ENCODE measurements at regions of chr1 and their contacts with region 1.

Region 1: GRCh38 chr1:94025383-94026340 is 95.3 kb downstream of the ABCA4 start:
- DNase-seq: no peak
- ATAC-seq: peak; percentile 63

Region 2: GRCh38 chr1:93977598-93977945 is 48.1 kb before region 1 on chr1:
- intact Hi-C with region 1: no loop called
- DNase-seq: no peak
- ATAC-seq: no peak

Region 3: GRCh38 chr1:94335950-94336349 is 310.3 kb after region 1 on chr1:
- intact Hi-C with region 1: loop called (anchors 2 kb)
- DNase-seq: peak; percentile 48
- ATAC-seq: peak; percentile 95

Region 4: DNA sequence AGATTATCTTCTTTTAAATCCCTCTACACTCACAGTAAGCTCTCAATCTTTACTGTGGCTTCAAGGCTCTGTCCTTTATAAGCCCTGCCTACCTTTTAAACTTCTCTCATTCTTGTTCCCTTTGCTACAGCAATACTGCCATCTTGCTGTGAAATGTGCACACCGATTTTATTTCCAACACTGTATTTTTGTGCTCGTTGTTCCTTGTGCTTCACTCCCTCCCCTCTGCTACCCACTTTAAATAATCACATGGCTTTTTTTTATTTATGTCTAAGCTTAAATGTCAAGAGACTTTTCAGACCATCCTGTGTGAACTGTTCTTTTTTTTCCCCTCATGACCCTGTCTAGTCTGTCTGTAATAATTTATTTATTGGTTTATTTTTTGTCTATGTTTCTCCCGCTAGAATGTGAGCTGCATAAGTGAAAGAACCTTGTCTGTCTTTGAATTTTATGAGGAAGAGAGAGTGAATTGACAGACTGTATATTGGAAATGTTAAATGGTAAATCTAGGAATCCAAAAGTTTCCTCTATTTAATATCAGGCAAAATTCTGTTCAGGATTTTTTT is 438.2 kb after region 1 on chr1:
- intact Hi-C with region 1: loop called (anchors 10 kb)
- DNase-seq: no peak
- ATAC-seq: peak; percentile 88

Measured in Right ventricle myocardium superior (tissue), 1 donor.